Activated B cell treated with CpG ODN at 0.5 μM for 24 hours (primary cell): ENCODE measurements at regions of chr5 and their contacts with region 1.

Region 1: GRCh38 chr5:151637676-151638075 is 46.5 kb upstream of the FAT2 start:
- DNase-seq: no peak
- ATAC-seq: no peak
- H3K4me3 Mint-ChIP-seq: no peak overlapping the region
- H3K27ac Mint-ChIP-seq: no peak overlapping the region
- H3K4me1 Mint-ChIP-seq: no peaks in the 10 kb centered on the region
- H3K27me3 Mint-ChIP-seq: peaks cover 14% of the 10 kb centered on the region
- CTCF ChIP-seq: no peak

Region 2: GRCh38 chr5:149872351-149873040 is 1765.2 kb before region 1 on chr5:
- CTCF ChIA-PET with region 1: no interaction called
- POLR2A ChIA-PET with region 1: no interaction called
- intact Hi-C with region 1: loop called (anchors 5 kb)
- DNase-seq: no peak
- ATAC-seq: no peak
- H3K4me3 Mint-ChIP-seq: no peak overlapping the region
- H3K27ac Mint-ChIP-seq: no peak overlapping the region
- H3K4me1 Mint-ChIP-seq: no peaks in the 10 kb centered on the region
- H3K27me3 Mint-ChIP-seq: no peaks in the 10 kb centered on the region
- CTCF ChIP-seq: no peak